IMR-90 (cell line): ENCODE measurements at regions of chr1 and their contacts with region 1.

Region 1: GRCh38 chr1:27365372-27366112 is 1.2 kb downstream of the MAP3K6 start:
- DNase-seq: peak; percentile 85
- ATAC-seq: peak; percentile 79
- H3K4me3 ChIP-seq: peak overlapping the region; percentile 77
- H3K27ac ChIP-seq: peak overlapping the region; percentile 90
- H3K4me1 ChIP-seq: peaks cover 11% of the 10 kb centered on the region
- H3K27me3 ChIP-seq: no peaks in the 10 kb centered on the region
- CTCF ChIP-seq: no peak
- POLR2A ChIP-seq: no peak
- RAD21 ChIP-seq: no peak

Region 2: GRCh38 chr1:27300341-27301051 is 65.0 kb before region 1 on chr1:
- CTCF ChIA-PET with region 1: interaction called, 9 read pairs
- POLR2A ChIA-PET with region 1: no interaction called
- dilution Hi-C with region 1: no loop called
- in situ Hi-C with region 1: no loop called
- intact Hi-C with region 1: loop called (anchors 2 kb)
- DNase-seq: peak; percentile 93
- ATAC-seq: peak; percentile 76
- H3K4me3 ChIP-seq: no peak overlapping the region
- H3K27ac ChIP-seq: peak overlapping the region; percentile 95
- H3K4me1 ChIP-seq: peaks cover 27% of the 10 kb centered on the region
- H3K27me3 ChIP-seq: no peaks in the 10 kb centered on the region
- CTCF ChIP-seq: peak; percentile 98
- POLR2A ChIP-seq: peak; percentile 49; the same call in 1 of the 2 replicates
- RAD21 ChIP-seq: peak; percentile 98